OCI-LY7 (cell line): ENCODE measurements at regions of chr1 and their contacts with region 1.

Region 1: GRCh38 chr1:35505908-35506798 is 51.0 kb downstream of the KIAA0319L start:
- DNase-seq: peak; percentile 63
- H3K4me3 ChIP-seq: peak overlapping the region; percentile 32
- H3K27ac ChIP-seq: peak overlapping the region; percentile 72
- H3K4me1 ChIP-seq: peaks cover 47% of the 10 kb centered on the region
- CTCF ChIP-seq: no peak

Region 2: DNA sequence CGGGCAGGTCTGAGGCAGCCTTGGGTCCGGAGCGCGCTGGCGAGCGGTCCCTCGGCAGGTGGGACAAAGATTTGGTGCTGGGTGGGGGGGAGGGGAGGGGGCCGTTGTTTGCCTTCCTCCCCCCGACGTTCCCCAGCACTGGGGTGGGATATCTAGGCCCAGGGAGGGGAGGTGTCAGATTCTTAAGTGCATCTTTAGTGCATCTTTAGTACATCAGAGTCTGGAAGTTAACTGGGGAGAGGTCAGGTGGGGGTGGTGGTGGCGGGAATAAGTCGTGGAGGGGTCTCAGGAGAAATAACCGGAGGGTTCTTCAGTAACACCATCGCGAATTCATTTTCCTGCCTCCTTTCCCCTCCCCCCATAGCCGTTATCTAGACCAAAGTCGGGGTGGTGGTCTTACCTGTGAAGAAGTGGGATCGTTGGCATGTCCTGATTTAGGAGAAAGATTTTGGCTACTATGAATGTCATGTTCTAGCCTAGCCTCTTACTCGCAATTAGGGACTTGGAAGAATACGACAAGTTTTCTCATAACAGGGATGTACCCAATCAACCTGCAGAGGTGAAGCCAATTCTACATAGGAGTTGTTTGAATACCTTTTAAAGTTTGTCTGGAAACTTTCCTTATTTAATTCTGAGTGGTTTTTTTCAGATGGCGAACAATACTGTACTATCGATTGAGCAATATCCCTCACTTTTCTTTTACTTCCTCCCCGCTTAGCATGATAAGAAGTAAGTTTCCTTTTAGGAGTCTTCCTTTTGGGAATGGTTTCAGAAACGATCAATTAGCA is 236.8 kb before region 1 on chr1:
- CTCF ChIA-PET with region 1: no interaction called
- POLR2A ChIA-PET with region 1: no interaction called
- intact Hi-C with region 1: no loop called
- DNase-seq: peak; percentile 17
- H3K4me3 ChIP-seq: peak overlapping the region; percentile 98
- H3K27ac ChIP-seq: peak overlapping the region; percentile 65
- H3K4me1 ChIP-seq: peaks cover 21% of the 10 kb centered on the region
- CTCF ChIP-seq: no peak

Region 3: DNA sequence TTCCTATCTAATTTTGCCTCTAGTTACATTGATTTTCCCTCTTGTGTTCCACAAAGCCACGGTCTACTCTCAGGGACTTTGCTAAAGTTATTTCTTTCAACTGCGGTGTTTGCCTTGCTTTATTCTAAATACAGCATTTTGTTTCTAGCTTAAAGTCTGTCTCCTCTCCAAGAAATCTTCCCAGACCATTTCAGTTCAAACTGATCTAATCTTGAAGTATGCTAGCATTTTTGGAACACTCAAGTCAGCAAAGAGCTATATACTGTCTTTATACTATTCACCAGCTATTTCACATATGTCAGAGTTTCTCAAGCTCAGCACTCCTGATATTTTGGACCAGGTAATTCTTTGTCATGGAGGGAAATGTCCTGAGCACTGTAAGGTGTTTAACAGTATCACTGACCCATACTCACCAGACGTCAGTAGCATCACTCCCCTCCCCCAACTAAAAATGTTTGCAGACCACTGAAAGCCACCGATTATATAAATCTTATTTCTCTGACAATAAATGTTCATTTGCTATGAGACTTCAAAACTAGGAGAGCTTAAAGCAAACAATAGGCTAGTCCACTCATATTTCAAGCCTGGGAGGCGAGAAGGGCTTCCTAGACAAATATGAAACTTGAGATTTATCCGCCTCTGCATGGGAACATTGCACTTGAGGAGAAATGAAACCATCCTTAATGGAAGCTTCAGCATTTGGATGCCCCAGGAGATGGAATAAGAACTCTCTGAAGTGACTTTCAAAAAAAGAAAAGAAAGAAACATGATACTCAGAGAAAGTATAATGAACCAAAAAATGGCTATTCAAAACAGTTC is 30.1 kb before region 1 on chr1:
- CTCF ChIA-PET with region 1: no interaction called
- POLR2A ChIA-PET with region 1: no interaction called
- intact Hi-C with region 1: no loop called
- DNase-seq: no peak
- H3K4me3 ChIP-seq: no peak overlapping the region
- H3K27ac ChIP-seq: no peak overlapping the region
- H3K4me1 ChIP-seq: no peaks in the 10 kb centered on the region
- CTCF ChIP-seq: no peak

Region 4: GRCh38 chr1:35532497-35533223 is 26.5 kb after region 1 on chr1:
- CTCF ChIA-PET with region 1: no interaction called
- POLR2A ChIA-PET with region 1: no interaction called
- intact Hi-C with region 1: no loop called
- DNase-seq: no peak
- H3K4me3 ChIP-seq: no peak overlapping the region
- H3K27ac ChIP-seq: no peak overlapping the region
- H3K4me1 ChIP-seq: no peaks in the 10 kb centered on the region
- CTCF ChIP-seq: no peak

Region 5: DNA sequence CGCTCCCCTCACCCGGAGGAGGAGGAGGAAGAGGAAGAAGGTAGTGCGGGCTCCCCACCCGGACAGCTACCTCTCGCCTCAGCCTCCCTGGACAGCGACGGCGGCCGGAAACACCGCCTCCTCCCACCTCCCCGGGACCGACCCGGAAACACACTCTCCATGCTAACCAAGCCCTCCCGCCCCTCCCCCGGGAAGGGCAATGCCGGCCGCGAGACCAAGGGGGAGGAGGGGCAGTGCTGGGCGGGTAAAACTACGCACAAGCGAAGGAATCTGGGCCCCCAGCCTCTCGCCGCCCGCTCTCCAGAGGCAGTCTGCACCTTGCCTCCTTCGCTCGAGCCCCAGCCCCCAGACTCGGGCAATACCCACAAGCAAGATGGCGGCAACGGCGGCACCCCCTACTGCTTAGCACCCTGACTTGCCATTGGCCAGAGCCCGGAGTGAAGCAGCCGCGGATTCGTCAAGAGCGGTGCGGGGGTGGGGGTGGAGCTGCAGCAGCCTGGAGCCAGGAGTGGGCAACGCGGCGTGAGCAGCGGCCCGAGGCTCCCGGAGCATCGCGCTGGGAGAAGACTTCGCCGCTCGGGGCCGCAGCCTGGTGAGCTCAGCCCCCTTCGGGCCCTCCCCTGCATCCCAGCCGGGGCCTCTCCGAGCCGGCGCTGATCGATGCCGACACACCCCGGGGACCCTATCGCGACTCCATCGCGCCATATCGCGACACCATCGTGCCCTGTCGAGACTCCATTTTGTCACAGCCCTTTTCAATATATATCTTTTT is 51.3 kb after region 1 on chr1 and contains the starts of genes KIAA0319L and NCDN:
- CTCF ChIA-PET with region 1: no interaction called
- POLR2A ChIA-PET with region 1: interaction called, 3 read pairs
- intact Hi-C with region 1: loop called (anchors 5 kb)
- DNase-seq: peak; percentile 97
- H3K4me3 ChIP-seq: peak within 1 kb of the TSS; percentile 99
- H3K27ac ChIP-seq: peak within 1 kb of the TSS; percentile 68
- H3K4me1 ChIP-seq: peaks cover 25% of the 10 kb centered on the region
- CTCF ChIP-seq: no peak
- total RNA-seq, gene KIAA0319L: 23.1 and 25.3 TPM in 2 replicates
- total RNA-seq, gene NCDN: 16.5 and 22.2 TPM in 2 replicates